Gastrocnemius medialis (tissue), 4 donors: ENCODE measurements at regions of chr1 and their contacts with region 1.

Region 1: GRCh38 chr1:12658531-12659453 is 14.9 kb downstream of the AADACL4 start:
- DNase-seq: peak; percentile 32 to 68
- ATAC-seq: peak; percentile 79 to 90
- H3K4me3 ChIP-seq: no peak overlapping the region
- H3K27ac ChIP-seq: no peak overlapping the region
- H3K4me1 ChIP-seq: peaks cover 0 to 2% of the 10 kb centered on the region in 2 donors
- H3K27me3 ChIP-seq: no peaks in the 10 kb centered on the region
- CTCF ChIP-seq: peak; percentile 89 to 96 (median 95)
- POLR2A ChIP-seq: no peak

Region 2: GRCh38 chr1:12275369-12275768 is 383.4 kb before region 1 on chr1:
- in situ Hi-C with region 1: no loop called
- intact Hi-C with region 1: loop called (anchors 1 kb)
- DNase-seq: no peak
- ATAC-seq: no peak
- H3K4me3 ChIP-seq: no peak overlapping the region
- H3K27ac ChIP-seq: no peak overlapping the region
- H3K4me1 ChIP-seq: peaks cover 5 to 7% of the 10 kb centered on the region in 2 donors
- H3K27me3 ChIP-seq: no peaks in the 10 kb centered on the region
- CTCF ChIP-seq: peak; percentile 9 to 66 (median 28)
- POLR2A ChIP-seq: no peak

Region 3: DNA sequence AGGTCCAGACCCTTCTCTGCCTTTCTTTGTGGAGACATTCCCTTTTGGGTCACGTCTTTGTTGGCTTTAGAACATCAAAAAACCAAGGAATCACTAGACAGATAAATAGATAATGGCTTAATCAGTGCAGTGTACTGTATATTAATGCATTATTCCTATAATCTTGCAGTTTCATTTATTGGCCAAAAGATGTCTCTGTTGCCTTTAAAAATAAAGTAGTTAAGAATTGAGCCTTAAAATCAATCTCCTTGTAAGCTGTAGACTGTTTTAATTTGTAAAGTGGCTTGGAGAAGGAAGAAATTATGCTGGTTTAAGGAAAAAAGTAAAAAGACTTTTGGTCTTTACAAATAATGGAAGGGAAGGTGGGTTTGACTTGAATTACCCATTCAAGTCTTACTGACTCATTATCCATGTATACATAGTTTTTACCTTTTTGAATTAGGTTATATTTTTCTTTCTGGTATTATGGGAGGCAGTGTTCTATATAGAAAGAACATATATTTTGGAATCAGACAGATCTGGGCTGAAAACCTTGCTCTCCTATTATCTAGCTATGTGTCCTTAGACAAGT is 344.4 kb before region 1 on chr1:
- in situ Hi-C with region 1: loop called in 3 of 4 experiments (anchors 5 to 10 kb)
- intact Hi-C with region 1: loop called (anchors 1 kb)
- DNase-seq: no peak
- ATAC-seq: peak; percentile 40 to 62
- H3K4me3 ChIP-seq: no peak overlapping the region
- H3K27ac ChIP-seq: peak overlapping the region; percentile 18 to 48 (median 42)
- H3K4me1 ChIP-seq: peaks cover 15 to 21% of the 10 kb centered on the region in 2 donors
- H3K27me3 ChIP-seq: no peaks in the 10 kb centered on the region
- CTCF ChIP-seq: peak in 2 of 5 experiments; percentile 31 to 47
- POLR2A ChIP-seq: no peak